ENCODE measurements at regions of chr5 and their contacts with region 1.

Region 1: GRCh38 chr5:147782110-147783028 is at the start of gene JAKMIP2:
- DNase-seq: peak; percentile 63
- ATAC-seq: peak; percentile 99
- H3K4me3 Mint-ChIP-seq: peak within 1 kb of the TSS; percentile 80
- H3K27ac Mint-ChIP-seq: peak within 1 kb of the TSS; percentile 76
- H3K4me1 Mint-ChIP-seq: peaks cover 15% of the 10 kb centered on the region
- H3K27me3 Mint-ChIP-seq: no peaks in the 10 kb centered on the region
- CTCF ChIP-seq: no peak
- total RNA-seq, gene JAKMIP2: 2.0 and 3.1 TPM in 2 replicates

Region 2: GRCh38 chr5:147628058-147628895 is 154.1 kb before region 1 on chr5:
- CTCF ChIA-PET with region 1: no interaction called
- POLR2A ChIA-PET with region 1: no interaction called
- intact Hi-C with region 1: loop called (anchors 1 kb)
- DNase-seq: no peak
- ATAC-seq: peak; percentile 72
- H3K4me3 Mint-ChIP-seq: no peak overlapping the region
- H3K27ac Mint-ChIP-seq: no peak overlapping the region
- H3K4me1 Mint-ChIP-seq: no peaks in the 10 kb centered on the region
- H3K27me3 Mint-ChIP-seq: no peaks in the 10 kb centered on the region
- CTCF ChIP-seq: no peak

Region 3: GRCh38 chr5:147734894-147735293 is 47.5 kb before region 1 on chr5:
- CTCF ChIA-PET with region 1: no interaction called
- POLR2A ChIA-PET with region 1: no interaction called
- intact Hi-C with region 1: no loop called
- DNase-seq: no peak
- ATAC-seq: no peak
- H3K4me3 Mint-ChIP-seq: no peak overlapping the region
- H3K27ac Mint-ChIP-seq: no peak overlapping the region
- H3K4me1 Mint-ChIP-seq: no peaks in the 10 kb centered on the region
- H3K27me3 Mint-ChIP-seq: no peaks in the 10 kb centered on the region
- CTCF ChIP-seq: no peak

Region 4: DNA sequence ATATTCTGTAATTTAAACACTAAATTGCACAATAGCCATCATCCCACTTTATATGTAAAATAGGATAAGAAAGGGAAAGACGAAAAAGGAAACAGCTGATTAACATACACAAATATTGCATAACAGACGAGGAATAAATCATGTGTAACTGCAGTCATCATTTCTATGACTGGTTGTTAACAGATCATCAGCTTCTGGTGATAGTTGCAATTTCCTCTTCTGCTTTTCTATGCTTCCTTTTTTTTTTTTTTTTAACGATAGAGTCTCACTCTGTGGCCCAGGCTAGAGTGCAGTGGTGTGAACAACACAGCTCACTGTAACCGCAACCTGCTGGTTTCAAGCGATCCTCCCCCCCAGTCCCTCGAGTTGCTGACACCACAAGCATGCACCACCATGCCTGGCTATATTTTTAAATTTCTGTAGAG is 22.7 kb after region 1 on chr5:
- CTCF ChIA-PET with region 1: no interaction called
- POLR2A ChIA-PET with region 1: interaction called, 8 read pairs
- intact Hi-C with region 1: loop called (anchors 1 kb)
- DNase-seq: no peak
- ATAC-seq: peak; percentile 96
- H3K4me3 Mint-ChIP-seq: peak overlapping the region; percentile 25
- H3K27ac Mint-ChIP-seq: peak overlapping the region; percentile 62
- H3K4me1 Mint-ChIP-seq: peaks cover 23% of the 10 kb centered on the region
- H3K27me3 Mint-ChIP-seq: peaks cover 18% of the 10 kb centered on the region
- CTCF ChIP-seq: no peak

Region 5: DNA sequence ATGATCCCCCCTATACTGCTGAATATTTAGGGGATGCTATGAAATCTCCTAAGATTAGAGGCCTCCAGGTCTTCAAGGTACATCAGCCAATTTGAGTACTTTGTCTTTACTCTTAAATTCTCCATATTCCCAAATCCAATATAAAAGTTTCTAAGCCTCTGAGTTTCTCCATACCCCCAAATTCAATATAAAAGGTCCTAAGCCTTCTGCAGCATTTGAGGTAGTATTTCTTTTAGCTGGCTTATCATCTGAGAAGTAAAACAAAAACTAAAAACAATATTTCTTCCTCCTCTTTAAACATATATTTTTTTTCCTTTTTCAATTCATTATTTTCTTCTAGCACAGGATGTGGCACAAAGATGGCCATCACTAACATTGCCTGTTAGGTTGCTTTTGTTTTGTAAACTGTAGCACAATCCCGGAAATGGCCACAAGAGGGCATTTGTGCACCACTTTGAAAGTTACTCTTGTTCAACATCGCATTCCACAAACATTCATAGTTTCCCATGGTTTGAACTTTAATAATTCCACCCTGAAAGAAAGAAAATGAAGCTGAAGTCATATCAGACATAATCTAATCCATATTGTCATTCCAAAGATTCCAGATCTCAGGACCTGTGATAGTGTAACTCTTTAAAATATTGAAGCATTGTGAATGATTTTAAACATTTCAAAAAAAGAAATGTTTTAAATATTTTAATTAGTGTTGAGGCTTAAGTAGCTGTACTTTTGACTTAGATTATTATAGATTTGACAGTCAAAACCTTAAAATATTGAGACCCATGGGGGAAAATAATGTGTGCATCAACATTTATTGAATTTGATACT is 75.1 kb after region 1 on chr5:
- CTCF ChIA-PET with region 1: no interaction called
- POLR2A ChIA-PET with region 1: no interaction called
- intact Hi-C with region 1: no loop called
- DNase-seq: no peak
- ATAC-seq: no peak
- H3K4me3 Mint-ChIP-seq: no peak overlapping the region
- H3K27ac Mint-ChIP-seq: no peak overlapping the region
- H3K4me1 Mint-ChIP-seq: no peaks in the 10 kb centered on the region
- H3K27me3 Mint-ChIP-seq: no peaks in the 10 kb centered on the region
- CTCF ChIP-seq: peak; percentile 61

Measured in activated B cell treated with CpG ODN at 0.5 μM for 24 hours (primary cell).